Activated naive CD4-positive, alpha-beta T cell treated with anti-CD3 and anti-CD28 coated beads for 36 hours (primary cell): ENCODE measurements at regions of chr9 and their contacts with region 1.

Region 1: DNA sequence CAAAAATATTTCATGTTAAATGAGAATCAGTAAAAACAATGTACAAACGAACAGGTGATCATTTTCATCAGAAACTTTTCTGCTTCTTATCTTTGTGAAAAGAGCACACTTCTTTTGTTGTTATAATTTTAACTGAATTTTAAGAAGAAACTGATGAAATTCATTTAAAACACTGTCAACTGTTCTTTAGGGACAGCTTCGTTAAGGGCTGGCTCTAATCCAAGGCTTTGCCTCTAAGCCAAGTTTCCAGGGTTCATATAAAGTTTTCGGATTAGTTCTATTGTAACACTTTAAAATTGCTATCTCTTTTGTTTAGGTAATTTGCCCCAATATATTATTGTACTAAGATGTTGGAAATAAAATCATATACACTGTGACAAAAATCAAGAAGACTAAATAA is 559.2 kb downstream of the TUSC1 start:
- DNase-seq: no peak
- H3K4me3 Mint-ChIP-seq: no peak overlapping the region
- H3K27ac Mint-ChIP-seq: no peak overlapping the region
- H3K4me1 Mint-ChIP-seq: no peaks in the 10 kb centered on the region
- H3K27me3 Mint-ChIP-seq: no peaks in the 10 kb centered on the region

Region 2: GRCh38 chr9:25048098-25048724 is 70.8 kb before region 1 on chr9:
- CTCF ChIA-PET with region 1: no interaction called
- intact Hi-C with region 1: loop called (anchors 10 kb)
- DNase-seq: no peak
- H3K4me3 Mint-ChIP-seq: no peak overlapping the region
- H3K27ac Mint-ChIP-seq: no peak overlapping the region
- H3K4me1 Mint-ChIP-seq: no peaks in the 10 kb centered on the region
- H3K27me3 Mint-ChIP-seq: no peaks in the 10 kb centered on the region